ENCODE measurements at regions of chr5 and their contacts with region 1.

Region 1: GRCh38 chr5:149567226-149567625 is 14.1 kb upstream of the ARHGEF37 start:
- DNase-seq: no peak
- H3K4me3 Mint-ChIP-seq: no peak overlapping the region
- H3K27ac Mint-ChIP-seq: no peak overlapping the region
- H3K4me1 Mint-ChIP-seq: peaks cover 14% of the 10 kb centered on the region
- H3K27me3 Mint-ChIP-seq: no peaks in the 10 kb centered on the region

Region 2: DNA sequence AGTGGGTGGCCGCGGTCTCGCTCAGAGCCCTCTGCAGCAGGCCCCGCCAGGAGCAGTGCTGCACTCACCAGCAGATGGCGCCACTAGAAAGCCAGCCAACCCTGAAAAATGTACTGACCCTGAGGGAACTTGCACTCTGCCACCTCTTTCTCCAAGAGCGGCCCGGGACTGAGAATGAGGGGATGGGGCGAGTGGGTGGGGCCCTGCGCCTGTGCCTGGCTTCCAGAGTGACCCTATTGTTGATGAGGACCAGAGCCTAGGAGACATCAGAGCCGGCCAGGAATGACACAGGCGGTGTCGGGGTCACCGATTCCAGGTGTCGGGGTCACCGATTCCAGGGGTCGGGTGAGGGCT is 185.3 kb before region 1 on chr5:
- CTCF ChIA-PET with region 1: interaction called, 17 read pairs
- POLR2A ChIA-PET with region 1: interaction called, 5 read pairs
- DNase-seq: peak; percentile 75
- H3K4me3 Mint-ChIP-seq: no peak overlapping the region
- H3K27ac Mint-ChIP-seq: no peak overlapping the region
- H3K4me1 Mint-ChIP-seq: no peaks in the 10 kb centered on the region
- H3K27me3 Mint-ChIP-seq: peaks cover 1% of the 10 kb centered on the region

Region 3: DNA sequence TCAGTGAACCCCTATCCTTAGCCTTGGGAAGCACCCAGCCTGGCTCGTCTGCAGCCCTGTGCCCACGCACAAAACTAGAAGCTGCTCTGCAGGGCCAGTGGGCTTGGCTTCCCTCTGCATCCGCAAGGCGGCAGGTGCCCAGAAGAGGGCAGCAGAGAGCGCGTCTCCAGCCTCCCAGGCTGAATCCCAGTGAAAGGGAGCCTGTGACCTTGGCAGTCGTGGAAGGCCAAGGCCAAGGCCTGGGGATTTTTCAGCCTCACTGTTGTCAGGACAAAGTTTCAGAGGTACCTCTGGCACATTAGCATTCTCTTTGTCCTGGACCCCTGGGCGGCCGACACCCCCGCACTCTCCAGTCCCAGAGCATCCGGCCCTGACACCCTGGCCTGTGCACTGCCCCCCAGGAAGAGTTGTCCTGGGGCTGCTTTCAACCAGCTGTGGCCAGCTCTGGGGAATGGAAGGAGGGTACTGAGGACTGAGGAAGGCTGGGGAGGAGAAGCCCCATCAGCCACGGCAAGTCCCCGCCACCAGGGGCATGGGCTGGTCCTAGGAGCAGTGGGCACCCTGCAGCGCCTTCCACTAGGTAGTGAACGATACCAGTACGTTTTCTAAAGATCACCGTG is 124.6 kb before region 1 on chr5:
- CTCF ChIA-PET with region 1: interaction called, 34 read pairs
- POLR2A ChIA-PET with region 1: no interaction called
- DNase-seq: peak; percentile 75
- H3K4me3 Mint-ChIP-seq: no peak overlapping the region
- H3K27ac Mint-ChIP-seq: peak overlapping the region; percentile 24
- H3K4me1 Mint-ChIP-seq: peaks cover 34% of the 10 kb centered on the region
- H3K27me3 Mint-ChIP-seq: no peaks in the 10 kb centered on the region

Region 4: GRCh38 chr5:149628246-149628645 is 61.0 kb after region 1 on chr5:
- CTCF ChIA-PET with region 1: no interaction called
- POLR2A ChIA-PET with region 1: no interaction called
- DNase-seq: no peak
- H3K4me3 Mint-ChIP-seq: no peak overlapping the region
- H3K27ac Mint-ChIP-seq: no peak overlapping the region
- H3K4me1 Mint-ChIP-seq: peaks cover 17% of the 10 kb centered on the region
- H3K27me3 Mint-ChIP-seq: no peaks in the 10 kb centered on the region

Measured in activated CD4-positive, alpha-beta memory T cell treated with anti-CD3 and anti-CD28 coated beads, Interleukin-2, amount 10 ng/mL, durations not matched to agents 7 days and 5 days (primary cell).